Activated CD8-positive, alpha-beta memory T cell treated with anti-CD3 and anti-CD28 coated beads, Interleukin-2, amount 10 ng/mL, durations not matched to agents 7 days and 5 days (primary cell): ENCODE measurements at regions of chr10 and their contacts with region 1.

Region 1: DNA sequence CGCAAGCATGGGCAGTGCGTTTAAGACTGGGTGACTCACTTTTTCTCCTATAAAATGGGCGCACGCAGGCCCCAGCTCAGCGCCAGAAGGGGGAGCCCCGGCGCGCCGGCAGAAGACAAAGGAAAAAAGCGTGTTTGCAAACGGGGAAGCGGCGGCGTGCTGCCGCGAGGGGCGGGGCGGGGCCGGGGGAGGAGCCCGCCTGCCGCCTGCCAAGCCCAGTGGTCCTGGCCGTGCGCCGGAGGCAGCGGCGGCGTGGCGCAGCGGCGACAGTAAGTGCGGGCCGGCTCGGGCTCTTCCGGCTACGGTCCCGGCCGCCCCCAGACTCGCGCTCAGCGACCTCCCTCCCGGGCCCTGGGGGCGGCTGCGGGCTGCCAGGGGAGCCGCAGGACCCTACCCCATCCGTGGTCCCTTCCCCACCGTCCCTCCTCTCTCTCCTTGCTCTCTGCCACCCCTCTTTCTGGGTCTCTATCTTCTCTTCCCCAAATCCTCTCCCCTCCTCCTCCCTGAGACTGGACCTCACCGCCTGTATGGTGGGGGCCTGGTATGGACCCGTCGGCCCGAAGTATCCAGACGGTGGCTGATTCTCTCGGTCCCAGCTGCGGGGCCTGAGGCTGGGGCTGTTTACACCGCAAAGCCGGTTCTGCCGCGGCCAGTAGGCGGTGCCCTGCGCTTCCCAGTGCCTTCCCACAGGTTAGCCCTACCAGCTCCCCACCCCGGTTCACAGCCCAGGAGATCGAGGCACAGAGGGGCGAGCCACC is at the start of gene SLC29A3:
- DNase-seq: peak; percentile 91
- ATAC-seq: peak; percentile 93
- H3K4me3 Mint-ChIP-seq: peak within 1 kb of the TSS; percentile 86
- H3K27ac Mint-ChIP-seq: peak within 1 kb of the TSS; percentile 66
- H3K4me1 Mint-ChIP-seq: peaks cover 34% of the 10 kb centered on the region
- H3K27me3 Mint-ChIP-seq: no peaks in the 10 kb centered on the region
- total RNA-seq, gene SLC29A3: 3.4 to 5.1 TPM

Region 2: DNA sequence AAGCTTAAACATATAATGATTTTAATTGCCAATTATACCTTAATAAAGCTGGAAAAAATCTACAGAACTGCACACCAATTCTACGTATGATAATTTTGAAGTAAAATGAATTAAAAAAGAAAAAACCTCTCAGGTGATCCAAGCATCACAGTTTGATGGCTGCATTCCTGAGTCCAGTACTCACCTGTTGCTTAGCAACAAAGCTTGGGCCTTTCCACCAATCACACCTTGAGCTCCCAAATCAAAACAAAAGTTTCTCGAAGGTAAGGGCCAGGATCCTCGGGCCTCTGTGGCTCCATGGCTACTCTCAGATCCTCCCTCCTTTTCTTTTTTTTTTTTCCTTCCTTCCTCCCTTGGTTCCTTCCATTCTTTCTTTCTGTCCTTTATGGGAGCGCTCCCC is 293.7 kb before region 1 on chr10:
- CTCF ChIA-PET with region 1: no interaction called
- DNase-seq: no peak
- ATAC-seq: no peak
- H3K4me3 Mint-ChIP-seq: no peak overlapping the region
- H3K27ac Mint-ChIP-seq: no peak overlapping the region
- H3K4me1 Mint-ChIP-seq: no peaks in the 10 kb centered on the region
- H3K27me3 Mint-ChIP-seq: peaks cover 14% of the 10 kb centered on the region

Region 3: GRCh38 chr10:71378336-71379117 is 59.3 kb after region 1 on chr10:
- CTCF ChIA-PET with region 1: interaction called, 13 read pairs
- DNase-seq: no peak
- ATAC-seq: no peak
- H3K4me3 Mint-ChIP-seq: peak overlapping the region; percentile 3
- H3K27ac Mint-ChIP-seq: no peak overlapping the region
- H3K4me1 Mint-ChIP-seq: peaks cover 15% of the 10 kb centered on the region
- H3K27me3 Mint-ChIP-seq: peaks cover 3% of the 10 kb centered on the region

Region 4: GRCh38 chr10:71404503-71405295 is 85.5 kb after region 1 on chr10:
- CTCF ChIA-PET with region 1: no interaction called
- DNase-seq: peak; percentile 37
- ATAC-seq: no peak
- H3K4me3 Mint-ChIP-seq: no peak overlapping the region
- H3K27ac Mint-ChIP-seq: no peak overlapping the region
- H3K4me1 Mint-ChIP-seq: no peaks in the 10 kb centered on the region
- H3K27me3 Mint-ChIP-seq: peaks cover 11% of the 10 kb centered on the region

Region 5: GRCh38 chr10:71443676-71444075 is 124.5 kb after region 1 on chr10:
- CTCF ChIA-PET with region 1: no interaction called
- DNase-seq: no peak
- ATAC-seq: no peak
- H3K4me3 Mint-ChIP-seq: no peak overlapping the region
- H3K27ac Mint-ChIP-seq: no peak overlapping the region
- H3K4me1 Mint-ChIP-seq: no peaks in the 10 kb centered on the region
- H3K27me3 Mint-ChIP-seq: no peaks in the 10 kb centered on the region

Region 6: DNA sequence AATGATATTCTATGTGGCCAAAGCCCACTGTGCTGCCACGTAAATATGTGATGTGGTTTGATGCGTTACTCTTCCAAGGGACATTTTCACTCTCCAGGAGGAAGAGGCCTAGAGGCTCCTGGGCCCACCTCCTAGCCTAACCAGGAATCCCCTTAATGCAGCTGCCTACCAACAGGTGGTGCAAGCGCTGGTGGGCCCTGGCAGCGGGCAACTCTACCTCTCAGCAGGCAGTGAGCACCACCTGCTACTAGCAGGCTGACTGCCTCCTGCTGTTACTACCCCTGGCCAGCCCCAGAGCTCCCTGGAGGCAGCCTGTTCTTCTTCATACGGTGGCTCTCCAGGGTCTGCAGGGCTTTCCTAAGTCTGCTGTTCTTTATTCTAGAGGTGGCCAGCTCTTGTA is 140.3 kb after region 1 on chr10:
- CTCF ChIA-PET with region 1: no interaction called
- DNase-seq: no peak
- ATAC-seq: no peak
- H3K4me3 Mint-ChIP-seq: no peak overlapping the region
- H3K27ac Mint-ChIP-seq: no peak overlapping the region
- H3K4me1 Mint-ChIP-seq: no peaks in the 10 kb centered on the region
- H3K27me3 Mint-ChIP-seq: peaks cover 5% of the 10 kb centered on the region